Esophagus muscularis mucosa (tissue), 4 donors: ENCODE measurements at regions of chr12 and their contacts with region 1.

Region 1: DNA sequence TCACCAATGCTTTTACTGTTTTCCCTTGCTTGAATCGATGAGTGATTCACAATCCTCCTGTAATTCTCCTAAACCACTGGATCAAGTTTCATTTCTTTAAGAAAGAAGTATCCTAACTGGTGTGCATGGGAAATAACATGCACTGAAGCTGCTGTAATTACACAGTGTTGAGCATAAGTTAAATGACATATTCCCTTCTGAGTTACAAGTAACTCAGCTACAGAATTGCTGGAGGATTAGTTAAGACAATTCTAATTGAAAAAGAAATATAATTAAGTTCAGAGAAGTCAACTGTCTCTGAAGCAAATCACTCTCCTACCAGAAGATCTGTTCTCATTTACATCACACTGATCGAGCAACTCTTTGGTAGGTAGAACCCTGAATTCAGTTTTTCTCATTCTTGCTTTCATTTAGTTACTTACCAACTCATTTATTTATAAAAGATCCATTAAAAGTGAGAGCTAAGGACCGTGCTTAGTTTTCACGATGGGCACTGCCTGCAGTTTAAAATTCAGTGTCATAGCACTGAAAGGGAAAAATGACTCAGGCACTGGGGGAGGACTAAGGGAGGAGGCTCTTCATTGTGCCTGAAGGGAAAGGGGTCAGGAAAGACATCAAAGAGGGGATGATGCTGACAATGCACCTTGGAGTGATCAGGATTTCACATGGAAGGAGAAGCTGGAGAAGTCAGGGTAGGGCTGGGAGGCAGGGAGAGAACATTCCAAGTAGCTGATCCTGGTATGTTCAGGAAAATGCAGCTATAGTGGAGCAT is 327.2 kb downstream of the EMP1 start:
- DNase-seq: no peak
- H3K4me3 ChIP-seq: no peak overlapping the region
- H3K27ac ChIP-seq: no peak overlapping the region
- H3K4me1 ChIP-seq: no peaks in the 10 kb centered on the region
- H3K27me3 ChIP-seq: no peaks in the 10 kb centered on the region
- CTCF ChIP-seq: no peak
- EP300 ChIP-seq: no peak
- POLR2A ChIP-seq: no peak

Region 2: DNA sequence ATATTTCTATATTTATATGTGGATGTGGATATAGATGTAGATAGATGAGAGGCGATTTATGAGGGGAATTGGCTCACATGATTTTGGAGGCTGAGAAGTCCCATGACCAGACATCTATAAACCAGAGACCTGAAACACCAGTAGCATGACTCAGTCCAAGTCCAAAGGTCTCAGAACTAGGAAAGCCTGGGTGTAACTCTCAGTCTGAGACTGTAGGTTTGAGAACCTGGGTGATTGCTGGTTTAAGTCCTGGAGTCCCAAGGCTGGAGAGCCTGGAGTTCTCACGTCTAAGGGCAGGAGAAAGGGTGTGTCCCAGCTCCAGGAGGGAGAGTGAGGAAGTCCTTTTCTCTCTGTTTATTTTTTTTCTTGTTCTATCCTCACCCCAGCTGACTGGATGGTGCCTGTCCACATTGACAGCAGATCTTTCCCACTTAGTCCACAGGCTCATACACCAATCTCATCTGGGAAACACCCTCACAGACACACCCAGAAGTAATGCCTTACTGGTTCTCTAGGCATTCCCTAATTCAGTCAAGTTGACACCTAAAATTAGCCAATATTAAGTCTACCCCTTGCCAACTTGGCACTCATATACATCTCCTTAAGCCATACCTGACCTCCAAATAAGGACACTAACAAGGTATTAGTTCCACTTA is 281.8 kb before region 1 on chr12:
- intact Hi-C with region 1: loop called (anchors 10 kb)
- DNase-seq: no peak
- H3K4me3 ChIP-seq: no peak overlapping the region
- H3K27ac ChIP-seq: no peak overlapping the region
- H3K4me1 ChIP-seq: no peaks in the 10 kb centered on the region
- H3K27me3 ChIP-seq: no peaks in the 10 kb centered on the region
- CTCF ChIP-seq: no peak
- EP300 ChIP-seq: no peak
- POLR2A ChIP-seq: no peak